Right cardiac atrium (tissue), 5 donors: ENCODE measurements at regions of chr9 and their contacts with region 1.

Region 1: GRCh38 chr9:19456996-19457692 is 48.3 kb downstream of the ACER2 start:
- DNase-seq: peak; percentile 34 to 61 (median 60)
- ATAC-seq: peak; percentile 94 to 95
- H3K4me3 ChIP-seq: peak overlapping the region; percentile 12
- H3K27ac ChIP-seq: peak overlapping the region; percentile 40
- H3K4me1 ChIP-seq: no peaks in the 10 kb centered on the region
- H3K27me3 ChIP-seq: no peaks in the 10 kb centered on the region

Region 2: DNA sequence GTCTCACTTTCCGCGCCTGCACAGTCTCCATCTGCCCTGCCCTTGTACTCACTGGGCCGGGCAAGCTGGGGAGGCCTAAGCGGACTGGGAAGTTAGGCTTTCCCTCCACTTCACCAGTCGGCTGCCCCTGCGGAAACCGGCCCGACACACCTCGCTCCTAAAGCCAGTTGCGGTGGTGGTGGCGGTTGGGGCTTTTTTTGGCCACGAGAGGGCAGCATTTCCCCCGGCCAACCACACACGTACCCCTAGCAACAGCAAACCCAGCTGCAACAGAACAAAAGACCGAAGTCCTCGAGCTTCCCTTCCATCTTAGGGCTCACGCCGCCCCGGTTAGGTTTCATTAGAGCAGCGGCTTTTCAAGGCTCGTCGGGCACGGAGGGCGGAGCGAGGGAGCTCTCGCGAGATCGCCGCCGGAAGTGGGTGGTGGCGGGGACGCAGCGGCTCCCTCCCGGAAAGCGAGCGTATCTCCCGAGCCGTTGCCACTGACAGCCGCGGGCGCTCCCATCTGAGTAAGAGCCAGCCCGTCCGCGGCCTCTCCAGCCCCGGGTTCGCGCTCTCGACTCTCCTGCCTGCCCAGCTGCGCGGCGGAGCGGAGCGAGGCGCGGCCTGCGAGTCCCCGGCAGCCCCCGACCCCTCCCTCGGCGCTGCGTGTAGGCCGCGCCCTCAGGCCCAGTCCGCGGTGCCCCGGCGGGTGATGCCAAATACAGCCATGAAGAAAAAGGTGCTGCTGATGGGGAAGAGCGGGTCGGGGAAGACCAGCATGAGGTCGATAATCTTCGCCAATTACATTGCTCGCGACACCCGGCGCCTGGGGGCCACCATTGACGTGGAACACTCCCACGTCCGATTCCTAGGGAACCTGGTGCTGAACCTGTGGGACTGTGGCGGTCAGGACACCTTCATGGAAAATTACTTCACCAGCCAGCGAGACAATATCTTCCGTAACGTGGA is 407.9 kb before region 1 on chr9 and contains the start of gene RRAGA:
- intact Hi-C with region 1: loop called in 1 of 4 experiments (anchors 10 kb)
- DNase-seq: peak; percentile 95 to 98 (median 98)
- ATAC-seq: peak; percentile 96 to 98
- H3K4me3 ChIP-seq: peak within 1 kb of the TSS; percentile 65
- H3K27ac ChIP-seq: peak within 1 kb of the TSS; percentile 85
- H3K4me1 ChIP-seq: peaks cover 5% of the 10 kb centered on the region
- H3K27me3 ChIP-seq: no peaks in the 10 kb centered on the region
- total RNA-seq, gene RRAGA: 85.7 to 92.5 (median 90.2) TPM

Region 3: DNA sequence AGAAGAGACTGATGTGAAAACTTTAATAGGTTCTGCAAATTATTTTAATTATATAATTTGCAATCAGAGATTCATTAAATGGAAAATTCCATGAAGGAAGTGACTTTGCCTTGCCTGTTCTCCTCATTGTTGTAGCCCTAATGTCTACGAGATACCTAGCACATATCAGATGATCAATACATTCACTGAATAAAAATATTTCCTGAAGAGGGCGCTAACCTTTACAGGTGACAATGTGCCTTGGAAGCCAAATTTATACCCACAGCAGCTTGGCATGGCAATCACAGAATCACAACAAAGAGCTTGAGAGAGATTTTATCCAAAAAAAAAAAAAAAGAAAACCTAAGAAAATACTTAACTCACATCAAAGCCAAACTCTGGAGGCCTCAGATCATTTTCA is 371.8 kb before region 1 on chr9:
- intact Hi-C with region 1: loop called in 1 of 4 experiments (anchors 10 kb)
- DNase-seq: no peak
- ATAC-seq: no peak
- H3K4me3 ChIP-seq: no peak overlapping the region
- H3K27ac ChIP-seq: no peak overlapping the region
- H3K4me1 ChIP-seq: no peaks in the 10 kb centered on the region
- H3K27me3 ChIP-seq: no peaks in the 10 kb centered on the region

Region 4: DNA sequence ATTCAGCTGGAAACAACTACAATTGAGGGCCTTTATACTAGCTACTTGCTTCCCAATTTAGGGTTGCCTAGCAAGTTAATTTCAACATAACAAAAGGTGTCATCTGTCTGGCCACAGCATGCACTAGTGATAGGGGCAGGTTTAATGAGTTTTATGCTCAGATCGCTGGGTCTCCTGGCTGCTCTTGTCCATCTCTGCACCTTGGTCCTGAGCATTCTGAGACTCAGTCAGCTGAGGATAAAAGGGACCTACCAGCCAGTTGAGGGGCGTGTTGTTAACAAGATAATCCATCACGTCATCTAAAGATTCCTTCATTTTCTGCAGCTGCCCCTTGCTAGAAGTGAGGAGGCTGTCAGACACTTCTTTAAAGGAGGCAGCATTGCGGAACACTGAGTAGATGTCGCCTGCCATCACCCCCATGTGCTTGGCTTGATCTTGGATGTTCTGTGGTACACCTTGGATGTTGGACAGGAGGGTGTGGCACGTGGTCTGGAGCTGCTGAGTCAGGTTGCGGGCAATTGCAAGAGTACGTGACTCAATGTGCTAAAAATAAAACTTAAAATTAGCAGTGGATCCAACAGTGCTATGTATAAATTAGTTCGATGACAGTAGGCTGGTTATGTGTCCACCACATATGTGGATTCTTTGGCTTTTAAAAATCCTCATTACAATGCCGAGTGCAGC is 340.9 kb before region 1 on chr9:
- intact Hi-C with region 1: loop called in 1 of 4 experiments (anchors 10 kb)
- DNase-seq: peak; percentile 43 to 70 (median 67)
- ATAC-seq: peak; percentile 69 to 78
- H3K4me3 ChIP-seq: no peak overlapping the region
- H3K27ac ChIP-seq: peak overlapping the region; percentile 7
- H3K4me1 ChIP-seq: peaks cover 4% of the 10 kb centered on the region
- H3K27me3 ChIP-seq: no peaks in the 10 kb centered on the region

Region 5: DNA sequence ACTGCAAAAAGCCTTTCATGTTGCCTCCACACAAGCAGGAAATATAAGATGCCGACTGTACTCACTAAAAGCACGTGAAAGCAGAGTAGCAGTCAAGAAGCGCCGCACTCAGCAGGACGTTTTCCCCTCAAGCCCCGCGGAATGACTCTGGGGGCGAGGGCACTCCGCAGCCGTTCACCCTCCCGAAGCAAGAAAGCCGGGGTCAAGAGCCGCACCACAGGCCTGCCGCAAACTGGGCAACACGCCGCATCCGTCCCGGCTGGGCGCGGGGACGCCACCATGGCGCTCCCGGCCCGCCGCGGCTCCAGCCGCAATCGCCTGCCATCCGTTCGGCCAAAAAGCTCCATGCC is 77.5 kb before region 1 on chr9:
- intact Hi-C with region 1: loop called in 2 of 4 experiments (anchors 10 kb)
- DNase-seq: peak in 2 of 3 donors; percentile 53 to 75
- ATAC-seq: peak; percentile 59 to 68
- H3K4me3 ChIP-seq: peak overlapping the region; percentile 76
- H3K27ac ChIP-seq: peak overlapping the region; percentile 78
- H3K4me1 ChIP-seq: no peaks in the 10 kb centered on the region
- H3K27me3 ChIP-seq: no peaks in the 10 kb centered on the region